Mammary epithelial cell (primary cell): ENCODE measurements at regions of chr12 and their contacts with region 1.

Region 1: DNA sequence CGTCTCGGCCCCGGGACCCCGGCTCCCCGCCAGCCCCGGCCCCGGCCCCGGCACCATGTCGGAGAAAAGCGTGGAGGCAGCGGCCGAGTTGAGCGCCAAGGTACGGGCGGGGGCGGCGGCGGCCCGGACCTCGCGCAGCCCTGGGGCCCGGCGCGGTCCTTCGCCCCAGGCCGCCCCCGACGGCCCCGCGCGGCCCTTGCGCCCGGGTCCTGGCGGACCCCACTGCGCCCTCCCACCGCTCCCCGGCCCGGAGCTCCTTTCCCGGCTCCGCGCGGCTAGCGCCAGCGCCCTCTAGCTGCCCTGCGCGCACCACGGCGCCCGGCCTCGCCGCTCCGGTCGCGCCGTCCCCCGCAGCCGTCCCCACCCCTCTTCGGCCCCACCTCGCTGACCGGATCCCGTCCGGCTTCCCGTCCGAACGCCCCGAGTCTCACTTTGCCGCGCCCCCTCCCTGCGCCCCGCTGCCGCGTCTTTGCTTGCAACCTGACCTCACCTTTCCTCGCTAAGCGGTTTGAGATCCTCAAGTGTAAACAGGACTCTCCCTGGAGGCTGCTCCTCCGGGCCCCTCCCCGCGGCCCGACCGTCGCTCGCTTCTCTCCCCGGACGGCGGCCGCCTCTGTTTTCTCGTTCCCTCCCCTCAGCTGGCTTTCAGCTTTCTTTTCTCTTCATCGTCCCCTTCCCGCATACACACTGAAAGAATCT is 637 bp downstream of the PTMS start:
- DNase-seq: peak; percentile 73
- H3K4me3 ChIP-seq: peak overlapping the region; percentile 41 to 78 (median 76)
- H3K27ac ChIP-seq: no peak overlapping the region
- H3K4me1 ChIP-seq: peaks cover 33% of the 10 kb centered on the region
- H3K27me3 ChIP-seq: no peaks in the 10 kb centered on the region
- CTCF ChIP-seq: peak; percentile 28 to 50

Region 2: GRCh38 chr12:6735448-6736191 is 31.2 kb before region 1 on chr12:
- CTCF ChIA-PET with region 1: no interaction called
- dilution Hi-C with region 1: no loop called
- in situ Hi-C with region 1: no loop called
- intact Hi-C with region 1: loop called (anchors 1 kb)
- DNase-seq: peak; percentile 97
- H3K4me3 ChIP-seq: no peak overlapping the region
- H3K27ac ChIP-seq: peak overlapping the region; percentile 7
- H3K4me1 ChIP-seq: peaks cover 13% of the 10 kb centered on the region
- H3K27me3 ChIP-seq: no peaks in the 10 kb centered on the region
- CTCF ChIP-seq: peak; percentile 76 to 81

Region 3: DNA sequence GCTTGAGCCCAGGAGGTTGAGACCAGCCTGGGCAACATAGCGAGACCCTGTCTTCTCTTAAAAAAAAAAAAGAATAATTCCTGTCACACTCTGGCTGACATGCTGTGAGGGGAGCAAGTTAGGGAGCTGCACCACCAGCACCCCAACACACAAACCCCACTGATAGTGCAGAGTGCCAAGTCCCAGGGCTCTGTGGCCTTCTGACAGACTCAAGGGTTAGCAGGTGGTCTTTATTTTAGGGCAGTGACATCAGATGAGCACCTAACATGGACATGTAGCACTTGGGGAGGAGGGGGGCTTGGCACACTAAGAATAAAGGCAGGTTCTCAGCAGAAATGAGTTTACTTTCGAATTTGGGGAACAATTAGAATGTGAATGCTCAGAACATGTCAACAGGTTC is 92.0 kb after region 1 on chr12:
- CTCF ChIA-PET with region 1: no interaction called
- dilution Hi-C with region 1: loop called (anchors 5 kb)
- in situ Hi-C with region 1: no loop called
- intact Hi-C with region 1: no loop called
- DNase-seq: no peak
- H3K4me3 ChIP-seq: no peak overlapping the region
- H3K27ac ChIP-seq: no peak overlapping the region
- H3K4me1 ChIP-seq: peaks cover 5% of the 10 kb centered on the region
- H3K27me3 ChIP-seq: no peaks in the 10 kb centered on the region
- CTCF ChIP-seq: no peak